ENCODE measurements at regions of chr11 and their contacts with region 1.

Region 1: GRCh38 chr11:62787005-62787759 is at the start of gene TMEM179B:
- DNase-seq: peak; percentile 96 to 99
- H3K4me3 ChIP-seq: peak within 1 kb of the TSS; percentile 84 to 96
- H3K27ac ChIP-seq: peak within 1 kb of the TSS; percentile 96 to 97
- H3K4me1 ChIP-seq: peaks cover 0 to 2% of the 10 kb centered on the region in 2 donors
- H3K27me3 ChIP-seq: no peaks in the 10 kb centered on the region
- CTCF ChIP-seq: peak in 3 of 4 experiments; percentile 61 to 67 (median 61)
- POLR2A ChIP-seq: peak; percentile 96 to 98
- total RNA-seq, gene TMEM179B: 22.3 to 83.8 (median 34.2) TPM

Region 2: GRCh38 chr11:62612366-62613290 is 174.6 kb before region 1 on chr11 and contains the starts of genes EML3 and ROM1:
- intact Hi-C with region 1: no loop called
- DNase-seq: peak; percentile 94 to 95
- H3K4me3 ChIP-seq: peak within 1 kb of the TSS; percentile 44 to 97
- H3K27ac ChIP-seq: peak within 1 kb of the TSS; percentile 93 to 99
- H3K4me1 ChIP-seq: peaks cover 0 to 10% of the 10 kb centered on the region in 2 donors
- H3K27me3 ChIP-seq: no peaks in the 10 kb centered on the region
- CTCF ChIP-seq: peak; percentile 71 to 99 (median 86)
- POLR2A ChIP-seq: peak in 1 of 2 donors; percentile 32
- total RNA-seq, gene EML3: 17.9 to 126 (median 36.8) TPM
- total RNA-seq, gene ROM1: 0.77 to 11.9 (median 5.3) TPM in 3 of 4 donors, not detected in the other

Region 3: DNA sequence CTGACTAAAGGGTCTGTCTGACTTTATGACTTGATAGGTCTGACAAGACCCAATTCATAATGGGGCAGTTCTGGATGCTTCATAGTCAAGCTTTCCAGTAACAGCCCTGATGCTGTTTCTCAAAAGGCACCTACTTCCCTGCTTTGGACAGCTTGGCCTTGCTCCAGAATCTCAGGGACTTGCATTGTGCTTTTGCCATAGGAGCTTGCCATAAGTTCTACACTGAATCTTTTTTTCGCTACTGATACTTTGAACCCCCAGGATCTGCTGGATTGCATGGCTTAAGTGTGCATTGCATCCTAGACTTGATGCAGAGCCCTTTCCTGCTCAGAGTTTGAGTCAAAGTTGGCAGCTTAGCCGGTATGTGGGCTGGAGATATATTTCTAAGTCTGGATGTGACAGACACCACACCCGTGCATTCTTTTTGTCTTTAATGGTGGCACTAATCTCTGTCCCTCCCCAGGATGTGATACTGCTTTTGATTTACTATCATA is 76.6 kb after region 1 on chr11:
- intact Hi-C with region 1: loop called (anchors 2 kb)
- DNase-seq: no peak
- H3K4me3 ChIP-seq: no peak overlapping the region
- H3K27ac ChIP-seq: no peak overlapping the region
- H3K4me1 ChIP-seq: no peaks in the 10 kb centered on the region
- H3K27me3 ChIP-seq: no peaks in the 10 kb centered on the region
- CTCF ChIP-seq: no peak
- POLR2A ChIP-seq: no peak